ENCODE measurements at regions of chr1 and their contacts with region 1.

Region 1: GRCh38 chr1:1273512-1274298 is at the start of gene UBE2J2:
- ATAC-seq: peak; percentile 52 to 95 (median 92)
- H3K4me3 ChIP-seq: peak within 1 kb of the TSS; percentile 86 to 98 (median 96)
- H3K27ac ChIP-seq: peak within 1 kb of the TSS; percentile 89 to 95
- H3K4me1 ChIP-seq: peaks cover 26 to 27% of the 10 kb centered on the region in 2 donors
- total RNA-seq, gene UBE2J2: 34.4 to 62.7 (median 46.5) TPM

Region 2: GRCh38 chr1:1019122-1019999 is 254.3 kb before region 1 on chr1:
- in situ Hi-C with region 1: loop called in 2 of 9 experiments (anchors 25 kb)
- ATAC-seq: peak; percentile 75 to 83 (median 80)
- H3K4me3 ChIP-seq: peak overlapping the region; percentile 68 to 91 (median 81)
- H3K27ac ChIP-seq: peak overlapping the region; percentile 94 to 98
- H3K4me1 ChIP-seq: peaks cover 27% of the 10 kb centered on the region in 2 donors

Region 3: GRCh38 chr1:1050577-1051052 is 223.1 kb before region 1 on chr1:
- in situ Hi-C with region 1: no loop called
- ATAC-seq: no peak
- H3K4me3 ChIP-seq: no peak overlapping the region
- H3K27ac ChIP-seq: no peak overlapping the region
- H3K4me1 ChIP-seq: no peaks in the 10 kb centered on the region

Region 4: GRCh38 chr1:1157426-1157913 is 116.2 kb before region 1 on chr1:
- in situ Hi-C with region 1: loop called in 1 of 9 experiments (anchors 25 kb)
- ATAC-seq: peak; percentile 50 to 86 (median 75)
- H3K4me3 ChIP-seq: peak overlapping the region; percentile 9 to 32 (median 26)
- H3K27ac ChIP-seq: peak overlapping the region; percentile 13 to 81
- H3K4me1 ChIP-seq: peaks cover 21 to 23% of the 10 kb centered on the region in 2 donors

Region 5: DNA sequence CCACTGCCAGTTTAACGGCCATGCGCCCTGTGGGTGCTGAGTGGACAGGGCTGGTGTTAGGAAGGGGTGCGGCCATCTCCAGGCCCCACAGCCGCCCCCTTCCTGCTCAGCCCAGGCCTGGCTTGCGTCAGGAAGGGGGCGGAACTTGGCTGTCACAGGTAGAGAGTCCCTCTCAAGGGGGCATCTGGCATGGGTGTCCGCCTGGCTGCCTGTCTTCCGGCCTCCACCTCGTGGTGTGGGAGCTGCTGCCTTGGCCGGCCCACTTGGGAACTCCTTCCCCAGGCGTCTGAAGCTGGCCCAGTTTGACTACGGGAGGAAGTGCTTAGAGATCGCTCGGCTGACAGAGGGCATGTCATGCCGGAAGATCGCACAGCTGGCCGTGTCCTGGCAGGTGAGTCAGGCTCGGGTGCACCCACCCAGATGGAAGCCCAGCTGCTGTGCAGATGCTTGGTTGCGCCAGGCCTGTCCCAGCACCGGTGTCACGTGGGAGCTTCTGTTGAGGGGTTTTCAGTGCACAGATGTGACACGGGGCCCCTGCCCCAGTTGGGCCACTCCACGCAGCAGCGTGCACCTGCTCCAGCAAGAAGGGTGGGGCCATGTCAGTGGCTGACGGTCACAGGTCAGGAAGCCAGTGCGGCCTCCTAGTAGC is 188.7 kb after region 1 on chr1:
- in situ Hi-C with region 1: no loop called
- ATAC-seq: peak in 6 of 8 experiments; percentile 22 to 81 (median 52)
- H3K4me3 ChIP-seq: no peak overlapping the region
- H3K27ac ChIP-seq: no peak overlapping the region
- H3K4me1 ChIP-seq: no peaks in the 10 kb centered on the region